Activated T-helper 2 cell treated with anti-CD3 and anti-CD28 coated beads, Interferon-gamma antibody, Interleukin-2, Interleukin-4, amounts not matched to agents 10 μg/mL and 5 μg/mL and 100 μg/mL, durations not matched to agents 14 hours and 24 hours and 36 hours (primary cell): ENCODE measurements at regions of chr5 and their contacts with region 1.

Region 1: DNA sequence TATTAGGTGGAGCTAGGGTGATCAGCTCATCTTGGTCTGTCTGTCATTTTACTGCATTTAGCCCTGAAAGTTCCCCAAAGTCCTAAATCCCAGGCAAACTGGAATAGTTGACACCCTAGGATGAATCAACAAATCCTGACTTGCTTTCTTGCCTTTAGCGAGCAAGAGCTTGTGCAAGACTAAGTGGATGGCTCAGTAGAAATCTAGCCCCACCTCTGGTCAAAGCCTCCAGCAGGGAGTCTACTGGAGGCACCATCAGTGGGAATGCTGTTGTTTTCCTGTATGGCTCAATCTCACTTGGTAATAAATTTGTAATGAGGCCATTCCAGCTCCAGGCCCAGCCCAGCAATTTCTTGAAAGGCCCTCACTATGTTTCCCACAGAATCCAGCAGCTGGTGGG is 43.7 kb upstream of the TRPC7 start:
- DNase-seq: no peak
- H3K4me3 Mint-ChIP-seq: no peak overlapping the region
- H3K27ac Mint-ChIP-seq: no peak overlapping the region
- H3K4me1 Mint-ChIP-seq: no peaks in the 10 kb centered on the region
- H3K27me3 Mint-ChIP-seq: no peaks in the 10 kb centered on the region

Region 2: DNA sequence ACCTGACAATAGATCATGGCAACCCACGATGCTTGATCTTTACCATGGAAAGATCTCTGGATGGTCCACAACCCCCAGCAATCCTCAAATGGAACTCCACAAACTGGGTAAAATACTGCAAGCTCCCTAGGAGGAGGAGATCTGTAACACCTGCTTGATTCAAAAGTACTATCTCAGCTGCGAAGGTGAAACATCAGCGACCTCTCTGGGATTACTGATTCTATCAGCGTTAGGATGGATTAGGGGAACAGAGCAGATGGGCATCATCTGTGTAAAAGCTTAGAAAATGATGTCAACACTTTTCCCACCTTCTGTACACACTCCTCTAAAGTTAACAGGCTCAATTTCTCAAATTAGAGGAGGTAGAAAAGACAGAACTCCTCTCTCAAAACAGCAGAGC is 12.1 kb before region 1 on chr5:
- intact Hi-C with region 1: loop called (anchors 2 kb)
- DNase-seq: no peak
- H3K4me3 Mint-ChIP-seq: no peak overlapping the region
- H3K27ac Mint-ChIP-seq: no peak overlapping the region
- H3K4me1 Mint-ChIP-seq: no peaks in the 10 kb centered on the region
- H3K27me3 Mint-ChIP-seq: no peaks in the 10 kb centered on the region